Mammary epithelial cell (primary cell): ENCODE measurements at regions of chr18 and their contacts with region 1.

Region 1: DNA sequence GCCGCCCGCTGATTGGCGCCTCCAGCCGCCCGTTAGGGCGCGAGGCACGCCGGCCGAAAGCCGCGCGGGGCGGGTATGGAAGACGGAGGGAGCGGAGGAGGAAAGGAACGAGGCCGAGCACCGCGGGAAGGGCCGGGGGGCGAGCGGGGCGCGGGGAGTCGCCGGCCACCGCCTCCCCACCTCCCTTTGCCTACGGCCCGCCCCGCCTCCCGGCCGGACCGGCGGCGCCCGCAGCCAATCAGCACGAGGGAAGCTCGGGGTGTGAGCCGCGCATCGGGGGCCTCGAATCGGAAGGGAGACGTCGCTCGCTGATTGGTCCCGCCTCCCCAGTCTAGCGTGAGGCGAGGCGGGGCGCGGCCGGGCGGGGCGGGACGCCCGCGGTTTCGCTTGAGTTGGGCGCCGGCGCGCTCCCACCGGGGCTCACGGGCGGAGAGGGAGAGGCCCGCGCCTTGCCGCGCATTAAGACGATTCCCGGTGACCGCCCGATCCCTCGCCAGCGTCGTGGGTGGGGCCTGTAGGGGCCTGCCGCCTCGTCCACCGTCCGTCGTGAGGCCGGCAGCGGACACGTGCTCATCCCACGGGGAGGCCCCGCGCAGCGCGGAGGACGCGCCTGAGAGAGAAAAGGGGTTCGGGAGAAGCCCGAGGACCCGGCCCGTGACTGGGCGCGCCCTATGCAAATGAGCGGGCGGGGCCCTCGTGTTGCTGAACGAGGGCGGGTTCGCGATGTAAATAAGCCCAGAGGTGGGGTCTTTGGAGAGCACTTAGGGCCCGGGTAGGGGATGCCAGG is 665 bp upstream of the SMAD2 start:
- DNase-seq: peak; percentile 97
- H3K4me3 ChIP-seq: peak overlapping the region; percentile 52 to 87 (median 78)
- H3K27ac ChIP-seq: peak overlapping the region; percentile 95
- H3K4me1 ChIP-seq: peaks cover 15% of the 10 kb centered on the region
- H3K27me3 ChIP-seq: no peaks in the 10 kb centered on the region
- CTCF ChIP-seq: no peak

Region 2: DNA sequence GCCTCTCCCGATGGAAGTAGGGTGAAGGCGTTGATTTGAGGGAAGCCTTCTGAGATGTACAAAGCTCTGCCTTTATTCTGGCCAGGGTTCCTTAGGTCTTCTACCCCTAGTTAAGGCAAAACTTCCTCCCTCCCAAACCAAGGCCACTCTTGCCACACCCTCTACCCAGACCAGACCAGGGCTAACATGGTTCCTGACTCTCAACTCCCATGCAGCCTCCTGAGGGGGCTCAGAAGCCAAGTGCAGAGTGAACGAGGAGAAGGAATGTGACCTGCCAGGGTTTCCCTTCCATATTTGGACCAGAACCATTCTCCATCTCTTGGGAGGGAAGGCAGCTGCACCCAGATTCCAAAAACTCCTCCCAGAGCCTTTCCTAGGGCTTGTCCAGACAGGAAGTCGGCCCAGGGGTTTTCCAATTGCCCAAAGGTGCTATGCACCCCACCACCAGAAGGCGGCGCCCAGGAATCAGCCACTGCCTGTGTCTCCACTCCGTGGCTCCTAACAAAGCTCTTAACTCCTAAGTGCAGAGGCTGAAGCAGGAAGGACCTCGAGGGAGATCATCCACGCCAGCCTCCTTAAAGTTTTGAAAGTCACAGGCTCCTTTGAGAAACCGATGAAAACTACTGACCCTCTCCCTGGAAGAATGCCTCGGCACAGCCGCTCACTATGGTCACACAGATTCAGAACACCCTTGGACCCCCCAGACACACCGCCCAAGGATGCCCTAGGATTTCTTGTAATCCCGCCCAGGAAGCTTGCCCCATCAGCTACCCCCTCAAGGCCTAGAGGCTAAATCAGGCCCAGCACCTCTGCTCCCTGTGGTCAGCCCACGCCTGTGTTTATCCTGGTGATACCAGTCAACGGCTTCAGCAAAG is 158.5 kb before region 1 on chr18:
- CTCF ChIA-PET with region 1: no interaction called
- dilution Hi-C with region 1: no loop called
- in situ Hi-C with region 1: no loop called
- intact Hi-C with region 1: loop called (anchors 1 kb)
- DNase-seq: peak; percentile 80
- H3K4me3 ChIP-seq: no peak overlapping the region
- H3K27ac ChIP-seq: no peak overlapping the region
- H3K4me1 ChIP-seq: peaks cover 4% of the 10 kb centered on the region
- H3K27me3 ChIP-seq: no peaks in the 10 kb centered on the region
- CTCF ChIP-seq: peak; percentile 92

Region 3: DNA sequence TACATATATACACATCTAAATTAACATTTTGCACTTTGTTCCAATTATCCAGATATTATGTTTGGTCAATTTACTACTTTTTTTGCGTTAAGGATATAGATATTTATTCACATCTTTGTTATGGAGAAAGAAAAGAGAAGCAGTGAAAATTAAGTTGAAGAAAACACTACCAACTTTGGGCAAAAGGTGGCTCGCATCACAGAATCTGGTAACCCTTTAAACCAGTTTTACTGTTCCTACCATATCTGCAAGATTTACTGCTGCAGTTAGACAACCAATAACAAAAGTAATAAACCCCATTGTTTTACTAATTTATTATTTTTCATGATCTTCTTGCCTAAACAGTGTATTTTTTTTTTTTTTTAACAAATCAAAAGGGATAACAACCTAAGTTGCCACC is 54.3 kb before region 1 on chr18:
- CTCF ChIA-PET with region 1: no interaction called
- dilution Hi-C with region 1: loop called (anchors 5 kb)
- in situ Hi-C with region 1: no loop called
- intact Hi-C with region 1: loop called (anchors 5 kb)
- DNase-seq: no peak
- H3K4me3 ChIP-seq: no peak overlapping the region
- H3K27ac ChIP-seq: no peak overlapping the region
- H3K4me1 ChIP-seq: peaks cover 4% of the 10 kb centered on the region
- H3K27me3 ChIP-seq: no peaks in the 10 kb centered on the region
- CTCF ChIP-seq: no peak

Region 4: GRCh38 chr18:47883771-47884413 is 47.2 kb before region 1 on chr18:
- CTCF ChIA-PET with region 1: no interaction called
- dilution Hi-C with region 1: loop called (anchors 5 kb)
- in situ Hi-C with region 1: no loop called
- intact Hi-C with region 1: loop called (anchors 5 kb)
- DNase-seq: peak; percentile 91
- H3K4me3 ChIP-seq: no peak overlapping the region
- H3K27ac ChIP-seq: peak overlapping the region; percentile 32
- H3K4me1 ChIP-seq: peaks cover 25% of the 10 kb centered on the region
- H3K27me3 ChIP-seq: no peaks in the 10 kb centered on the region
- CTCF ChIP-seq: no peak

Region 5: GRCh38 chr18:48080546-48080945 is 149.4 kb after region 1 on chr18:
- CTCF ChIA-PET with region 1: no interaction called
- dilution Hi-C with region 1: no loop called
- in situ Hi-C with region 1: no loop called
- intact Hi-C with region 1: no loop called
- DNase-seq: no peak
- H3K4me3 ChIP-seq: no peak overlapping the region
- H3K27ac ChIP-seq: no peak overlapping the region
- H3K4me1 ChIP-seq: peaks cover 3% of the 10 kb centered on the region
- H3K27me3 ChIP-seq: no peaks in the 10 kb centered on the region
- CTCF ChIP-seq: no peak

Region 6: GRCh38 chr18:48244530-48244929 is 313.4 kb after region 1 on chr18:
- CTCF ChIA-PET with region 1: no interaction called
- dilution Hi-C with region 1: no loop called
- in situ Hi-C with region 1: no loop called
- intact Hi-C with region 1: no loop called
- DNase-seq: no peak
- H3K4me3 ChIP-seq: no peak overlapping the region
- H3K27ac ChIP-seq: no peak overlapping the region
- H3K4me1 ChIP-seq: no peaks in the 10 kb centered on the region
- H3K27me3 ChIP-seq: no peaks in the 10 kb centered on the region
- CTCF ChIP-seq: no peak